WTC11 (cell line): ENCODE measurements at regions of chr11 and their contacts with region 1.

Region 1: GRCh38 chr11:128757235-128757711 is 63.4 kb downstream of the FLI1 start:
- DNase-seq: peak; percentile 36
- ATAC-seq: peak; percentile 76
- H3K4me3 Mint-ChIP-seq: no peak overlapping the region
- H3K27ac Mint-ChIP-seq: no peak overlapping the region
- H3K4me1 Mint-ChIP-seq: peaks cover 26% of the 10 kb centered on the region
- H3K27me3 Mint-ChIP-seq: peaks cover 3% of the 10 kb centered on the region
- CTCF ChIP-seq: no peak

Region 2: DNA sequence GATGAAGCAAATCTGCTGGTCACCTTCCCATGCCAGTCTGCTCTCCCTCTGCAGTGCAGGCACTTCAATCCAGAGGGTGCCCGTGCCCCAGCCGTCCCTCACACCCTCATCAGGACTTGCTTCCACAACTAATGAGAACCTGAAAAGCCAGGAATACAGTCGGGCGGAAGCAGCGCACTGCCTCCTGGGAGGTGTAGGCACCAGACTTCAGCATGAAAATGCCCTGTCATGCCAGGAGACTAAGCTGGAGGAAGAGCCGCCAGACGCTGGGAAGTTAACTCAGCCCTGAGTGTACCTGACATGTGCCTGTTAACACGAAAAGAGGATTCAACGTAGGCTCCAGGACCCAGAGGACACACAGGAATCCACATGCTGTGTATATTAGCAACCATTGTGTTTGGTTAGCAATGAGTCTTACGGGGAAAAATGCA is 103.5 kb before region 1 on chr11:
- CTCF ChIA-PET with region 1: interaction called, 18 read pairs
- POLR2A ChIA-PET with region 1: no interaction called
- DNase-seq: peak; percentile 43
- ATAC-seq: peak; percentile 94
- H3K4me3 Mint-ChIP-seq: no peak overlapping the region
- H3K27ac Mint-ChIP-seq: no peak overlapping the region
- H3K4me1 Mint-ChIP-seq: peaks cover 12% of the 10 kb centered on the region
- H3K27me3 Mint-ChIP-seq: no peaks in the 10 kb centered on the region; the same call in 1 of the 2 replicates
- CTCF ChIP-seq: no peak

Region 3: DNA sequence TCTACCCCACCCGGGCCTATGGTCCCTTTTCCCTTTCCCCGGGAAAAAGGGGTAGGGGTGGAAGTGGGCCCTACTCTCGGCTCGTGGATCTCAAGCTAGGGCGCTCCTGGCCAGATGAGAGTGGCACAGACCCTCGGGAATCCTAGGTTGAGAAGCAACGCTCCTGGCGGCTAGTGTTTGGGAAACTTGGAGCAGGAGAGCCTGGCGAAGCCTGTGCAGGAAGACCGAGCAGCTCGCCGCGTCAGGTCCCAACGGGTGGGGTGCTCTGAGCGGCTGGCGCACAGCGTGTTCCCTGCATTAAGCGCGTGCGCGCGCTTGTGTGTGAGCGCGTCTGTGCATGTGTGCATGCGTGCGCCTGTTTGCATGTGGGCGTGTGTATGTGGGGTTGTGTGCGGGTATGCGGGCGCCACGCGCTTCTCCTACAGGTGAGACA is 70.5 kb before region 1 on chr11:
- CTCF ChIA-PET with region 1: interaction called, 22 read pairs
- POLR2A ChIA-PET with region 1: no interaction called
- DNase-seq: peak; percentile 60
- ATAC-seq: peak; percentile 20
- H3K4me3 Mint-ChIP-seq: peak overlapping the region; percentile 77
- H3K27ac Mint-ChIP-seq: no peak overlapping the region
- H3K4me1 Mint-ChIP-seq: peaks cover 72% of the 10 kb centered on the region
- H3K27me3 Mint-ChIP-seq: peaks cover 100% of the 10 kb centered on the region
- CTCF ChIP-seq: no peak

Region 4: GRCh38 chr11:128692753-128693415 is 64.4 kb before region 1 on chr11:
- CTCF ChIA-PET with region 1: interaction called, 10 read pairs
- POLR2A ChIA-PET with region 1: no interaction called
- DNase-seq: peak; percentile 49
- ATAC-seq: peak; percentile 7
- H3K4me3 Mint-ChIP-seq: peak overlapping the region; percentile 77
- H3K27ac Mint-ChIP-seq: no peak overlapping the region
- H3K4me1 Mint-ChIP-seq: peaks cover 48% of the 10 kb centered on the region
- H3K27me3 Mint-ChIP-seq: peaks cover 96% of the 10 kb centered on the region
- CTCF ChIP-seq: no peak

Region 5: GRCh38 chr11:128735935-128736605 is 21.2 kb before region 1 on chr11:
- CTCF ChIA-PET with region 1: interaction called, 12 read pairs
- POLR2A ChIA-PET with region 1: no interaction called
- DNase-seq: no peak
- ATAC-seq: no peak
- H3K4me3 Mint-ChIP-seq: no peak overlapping the region
- H3K27ac Mint-ChIP-seq: no peak overlapping the region
- H3K4me1 Mint-ChIP-seq: peaks cover 66% of the 10 kb centered on the region
- H3K27me3 Mint-ChIP-seq: peaks cover 10% of the 10 kb centered on the region
- CTCF ChIP-seq: no peak